ENCODE measurements at regions of chr7 and their contacts with region 1.

Region 1: DNA sequence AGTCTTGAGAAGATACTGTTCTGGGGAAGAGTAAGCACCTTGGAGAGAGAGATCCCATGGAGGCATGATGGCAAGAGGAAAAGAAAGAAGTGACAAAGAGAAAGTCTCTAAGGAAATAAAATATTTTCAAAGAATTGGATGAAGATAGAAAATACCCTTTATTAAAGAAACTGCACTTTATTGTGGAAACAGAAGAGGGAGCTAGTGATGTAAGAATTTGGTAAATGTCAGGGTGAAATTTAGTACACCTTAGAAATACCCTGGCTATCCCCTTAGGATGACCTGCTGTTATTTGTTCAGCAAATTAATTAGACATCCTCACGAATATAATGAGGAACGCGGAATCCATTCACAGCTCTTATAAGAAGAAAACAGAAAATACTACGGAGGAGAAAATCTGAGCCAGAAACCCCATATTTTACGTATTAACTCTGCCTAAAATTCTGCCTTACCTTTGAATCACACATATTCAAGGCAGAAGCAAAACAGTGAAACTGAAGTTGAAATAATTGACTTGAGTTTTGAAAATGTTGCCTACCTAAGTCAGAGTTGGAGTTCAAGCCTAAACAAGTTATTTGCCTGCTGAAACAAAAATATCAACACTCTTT is 90.7 kb downstream of the TFPI2 start:
- DNase-seq: no peak
- H3K4me3 ChIP-seq: no peak overlapping the region
- H3K27ac ChIP-seq: no peak overlapping the region
- H3K27me3 ChIP-seq: no peaks in the 10 kb centered on the region
- CTCF ChIP-seq: peak; percentile 61

Region 2: DNA sequence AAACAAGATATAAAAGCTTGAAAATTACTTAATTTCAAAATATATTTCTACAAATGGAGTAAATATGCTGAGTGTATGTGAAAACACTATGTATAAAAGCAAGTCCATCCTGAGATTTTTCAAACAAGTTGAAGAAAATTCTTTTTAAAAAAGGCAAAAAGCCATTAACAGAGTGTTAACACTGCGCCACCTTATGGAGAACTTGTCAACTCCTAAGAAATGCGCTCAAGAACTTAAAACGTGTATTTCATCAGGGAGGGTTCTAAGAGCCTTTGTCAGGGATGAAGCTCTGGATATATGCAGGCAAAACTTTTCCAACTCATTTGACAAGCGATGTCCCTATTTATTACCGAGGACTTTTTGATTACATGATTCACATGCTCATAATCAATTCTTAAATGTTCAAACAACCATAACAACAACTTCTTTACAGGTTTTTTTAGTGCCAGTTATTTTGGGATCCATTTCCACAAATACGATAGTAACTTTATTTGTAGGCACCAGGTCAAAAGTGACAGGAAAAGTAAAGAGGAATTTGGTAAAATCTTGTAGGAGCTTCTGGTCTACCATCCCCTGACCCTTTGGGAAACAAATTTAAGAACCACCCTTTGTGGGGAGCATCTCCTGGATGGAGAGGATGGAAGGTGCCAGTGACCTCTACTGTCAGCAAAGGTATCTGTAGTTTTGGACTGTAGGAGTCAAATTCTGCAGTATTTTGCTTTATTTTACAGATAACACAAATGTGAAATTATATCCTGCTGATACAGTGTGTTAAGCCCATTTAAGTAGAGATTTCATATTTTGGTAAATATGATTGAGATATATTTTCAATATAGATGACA is 248.6 kb before region 1 on chr7:
- CTCF ChIA-PET with region 1: no interaction called
- POLR2A ChIA-PET with region 1: no interaction called
- DNase-seq: peak; percentile 18
- H3K4me3 ChIP-seq: no peak overlapping the region
- H3K27ac ChIP-seq: no peak overlapping the region
- H3K27me3 ChIP-seq: no peaks in the 10 kb centered on the region
- CTCF ChIP-seq: peak; percentile 65

Region 3: DNA sequence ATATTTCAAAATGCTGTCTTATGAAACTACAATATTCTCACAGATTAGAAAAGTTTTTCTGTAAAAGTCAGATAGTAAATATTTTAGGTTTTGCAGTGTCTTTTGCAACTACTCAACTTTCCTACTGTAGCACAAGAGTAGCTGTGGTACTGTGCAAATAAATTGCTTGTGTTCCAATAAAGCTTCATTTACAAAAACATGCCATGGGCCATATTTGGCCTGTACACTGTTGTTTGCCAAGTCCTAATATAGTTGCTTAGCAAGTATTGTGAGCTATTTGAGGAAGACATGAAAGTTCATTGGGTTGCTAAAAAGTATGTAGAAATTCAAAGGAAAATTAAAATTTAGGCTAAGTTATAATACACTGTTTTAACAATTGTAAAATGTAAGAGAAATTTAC is 10.7 kb after region 1 on chr7:
- CTCF ChIA-PET with region 1: interaction called, 12 read pairs
- POLR2A ChIA-PET with region 1: no interaction called
- DNase-seq: no peak
- H3K4me3 ChIP-seq: no peak overlapping the region
- H3K27ac ChIP-seq: no peak overlapping the region
- H3K27me3 ChIP-seq: no peaks in the 10 kb centered on the region
- CTCF ChIP-seq: no peak

Region 4: GRCh38 chr7:94223375-94224070 is 423.7 kb after region 1 on chr7:
- CTCF ChIA-PET with region 1: interaction called, 48 read pairs
- POLR2A ChIA-PET with region 1: no interaction called
- DNase-seq: peak; percentile 34
- H3K4me3 ChIP-seq: no peak overlapping the region
- H3K27ac ChIP-seq: no peak overlapping the region
- H3K27me3 ChIP-seq: no peaks in the 10 kb centered on the region
- CTCF ChIP-seq: peak; percentile 74

Region 5: GRCh38 chr7:94276795-94277194 is 476.9 kb after region 1 on chr7:
- CTCF ChIA-PET with region 1: interaction called, 11 read pairs
- POLR2A ChIA-PET with region 1: no interaction called
- DNase-seq: no peak
- H3K4me3 ChIP-seq: no peak overlapping the region
- H3K27ac ChIP-seq: no peak overlapping the region
- H3K27me3 ChIP-seq: no peaks in the 10 kb centered on the region
- CTCF ChIP-seq: peak; percentile 41